Heart left ventricle (tissue), 16 donors: ENCODE measurements at regions of chr9 and their contacts with region 1.

Region 1: GRCh38 chr9:114653556-114654159 is 3.9 kb downstream of the TEX53 start:
- DNase-seq: peak in 4 of 5 donors; percentile 46 to 67 (median 58)
- ATAC-seq: peak; percentile 47 to 80 (median 76)
- H3K4me3 ChIP-seq: no peak overlapping the region
- H3K27ac ChIP-seq: no peak overlapping the region
- H3K4me1 ChIP-seq: peaks cover 0 to 7% (median 0%) of the 10 kb centered on the region in 12 donors
- H3K27me3 ChIP-seq: no peaks in the 10 kb centered on the region
- CTCF ChIP-seq: peak; percentile 73 to 89 (median 86)
- POLR2A ChIP-seq: no peak

Region 2: DNA sequence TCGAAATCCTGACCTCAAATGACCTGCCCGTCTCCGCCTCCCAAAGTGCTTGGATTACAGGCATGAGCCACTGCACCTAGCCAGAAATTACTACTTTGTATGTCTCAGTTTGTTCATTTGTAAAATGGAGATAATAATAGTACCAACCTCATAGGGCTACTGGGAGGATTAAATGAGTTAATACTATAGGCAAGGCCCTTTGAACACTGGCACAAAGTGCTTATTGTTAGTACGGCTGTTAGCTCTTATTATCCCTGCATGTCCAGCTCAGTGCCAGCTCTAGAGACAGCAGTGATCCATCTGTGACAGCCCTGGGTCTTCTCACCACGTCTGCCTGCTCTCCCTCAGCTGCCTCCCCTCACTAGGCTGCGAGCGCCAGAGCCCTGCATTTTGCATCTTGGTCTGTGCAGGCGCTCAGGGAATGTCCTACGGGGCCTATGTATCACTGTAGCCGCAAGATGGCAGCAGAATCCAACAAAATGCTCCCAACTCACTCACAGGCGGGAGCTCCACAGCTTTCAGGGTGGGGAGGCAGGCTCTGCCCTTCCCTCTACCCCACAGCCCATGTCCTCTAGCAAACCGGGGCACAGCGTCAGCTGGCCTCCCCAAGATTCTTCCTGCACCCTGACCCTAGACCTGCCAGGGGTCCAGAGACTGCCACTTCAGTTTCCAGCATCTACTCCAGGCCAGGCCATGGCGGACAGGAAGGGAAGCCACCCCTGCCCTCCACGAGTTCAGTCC is 248.2 kb before region 1 on chr9:
- intact Hi-C with region 1: loop called (anchors 1 to 5 kb)
- DNase-seq: peak; percentile 73 to 81 (median 79)
- ATAC-seq: peak; percentile 76 to 95 (median 92)
- H3K4me3 ChIP-seq: no peak overlapping the region
- H3K27ac ChIP-seq: no peak overlapping the region
- H3K4me1 ChIP-seq: peaks cover 0 to 7% (median 0%) of the 10 kb centered on the region in 12 donors
- H3K27me3 ChIP-seq: no peaks in the 10 kb centered on the region
- CTCF ChIP-seq: peak; percentile 72 to 87 (median 82)
- POLR2A ChIP-seq: no peak

Region 3: DNA sequence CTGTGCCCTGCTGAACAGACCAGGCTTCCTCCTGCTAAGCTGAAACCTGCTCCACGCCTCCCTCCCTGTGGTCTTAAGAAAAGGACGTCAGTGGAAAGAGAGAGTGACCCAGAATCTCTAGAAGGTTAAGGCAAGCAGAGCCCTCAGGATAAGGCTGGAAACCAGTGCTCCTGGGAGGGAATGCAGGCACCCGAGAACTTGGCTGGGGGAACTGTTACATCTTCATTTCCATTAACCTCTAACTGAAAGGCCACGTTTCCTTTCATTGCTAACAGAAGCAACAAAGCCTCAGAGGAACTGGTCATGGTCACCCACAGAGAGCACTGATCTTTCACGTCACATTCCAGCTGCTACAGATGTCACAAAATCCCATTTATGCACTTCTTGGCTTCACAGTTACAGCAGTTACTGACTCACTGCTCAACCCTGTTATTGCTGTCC is 239.8 kb before region 1 on chr9:
- intact Hi-C with region 1: loop called in 5 of 10 experiments (anchors 2 to 5 kb)
- DNase-seq: no peak
- ATAC-seq: peak in 1 of 4 donors; percentile 43
- H3K4me3 ChIP-seq: no peak overlapping the region
- H3K27ac ChIP-seq: peak overlapping the region in 2 of 12 donors; percentile 33 to 51
- H3K4me1 ChIP-seq: peaks cover 0 to 12% (median 0%) of the 10 kb centered on the region in 12 donors
- H3K27me3 ChIP-seq: no peaks in the 10 kb centered on the region
- CTCF ChIP-seq: no peak
- POLR2A ChIP-seq: no peak

Region 4: GRCh38 chr9:114434878-114435311 is 218.8 kb before region 1 on chr9:
- intact Hi-C with region 1: loop called in 6 of 10 experiments (anchors 5 to 10 kb)
- DNase-seq: no peak
- ATAC-seq: peak in 2 of 4 donors; percentile 36 to 41
- H3K4me3 ChIP-seq: no peak overlapping the region
- H3K27ac ChIP-seq: no peak overlapping the region
- H3K4me1 ChIP-seq: no peaks in the 10 kb centered on the region
- H3K27me3 ChIP-seq: peaks cover 0 to 11% (median 3%) of the 10 kb centered on the region in 9 donors
- CTCF ChIP-seq: peak; percentile 11 to 58 (median 38)
- POLR2A ChIP-seq: no peak

Region 5: DNA sequence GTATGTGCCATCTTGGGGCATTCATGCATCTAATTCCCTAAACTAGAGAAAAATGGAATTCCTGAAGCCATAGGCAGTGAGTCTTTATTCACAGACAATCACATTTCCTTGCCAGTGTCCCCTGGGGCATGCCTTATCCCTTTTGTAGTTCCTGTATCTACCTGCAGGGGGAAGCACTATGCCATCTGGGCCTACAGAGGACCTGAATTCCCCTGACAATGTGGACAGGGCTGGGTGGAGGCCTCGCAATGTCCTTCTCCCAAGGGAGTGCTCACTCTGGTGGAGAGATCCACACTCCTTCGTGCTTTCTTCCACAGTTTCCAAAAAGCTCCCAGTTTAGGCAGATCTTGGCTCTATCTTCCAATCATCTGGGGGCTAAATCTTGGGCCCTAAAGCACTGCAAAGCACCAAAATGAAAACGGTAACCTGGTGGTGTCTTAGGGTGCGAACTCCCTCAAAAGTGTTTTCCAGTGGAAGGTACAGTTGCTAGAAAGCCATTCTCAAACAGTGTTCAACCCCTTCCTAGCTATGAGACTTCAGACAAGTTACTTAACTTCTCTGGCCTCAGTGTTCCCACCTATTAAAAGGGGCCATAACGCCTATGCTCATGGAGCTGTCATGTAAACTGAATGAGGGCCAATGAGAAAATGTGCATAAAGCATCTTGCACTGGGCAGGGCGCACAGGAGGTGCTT is 165.9 kb before region 1 on chr9:
- intact Hi-C with region 1: loop called in 7 of 10 experiments (anchors 2 to 5 kb)
- DNase-seq: peak in 2 of 5 donors; percentile 44 to 46
- ATAC-seq: peak; percentile 71 to 88 (median 78)
- H3K4me3 ChIP-seq: no peak overlapping the region
- H3K27ac ChIP-seq: no peak overlapping the region
- H3K4me1 ChIP-seq: peaks cover 0 to 7% (median 0%) of the 10 kb centered on the region in 12 donors
- H3K27me3 ChIP-seq: peaks cover 0 to under 1% (median 0%) of the 10 kb centered on the region in 9 donors
- CTCF ChIP-seq: peak; percentile 47 to 76 (median 64)
- POLR2A ChIP-seq: no peak

Region 6: DNA sequence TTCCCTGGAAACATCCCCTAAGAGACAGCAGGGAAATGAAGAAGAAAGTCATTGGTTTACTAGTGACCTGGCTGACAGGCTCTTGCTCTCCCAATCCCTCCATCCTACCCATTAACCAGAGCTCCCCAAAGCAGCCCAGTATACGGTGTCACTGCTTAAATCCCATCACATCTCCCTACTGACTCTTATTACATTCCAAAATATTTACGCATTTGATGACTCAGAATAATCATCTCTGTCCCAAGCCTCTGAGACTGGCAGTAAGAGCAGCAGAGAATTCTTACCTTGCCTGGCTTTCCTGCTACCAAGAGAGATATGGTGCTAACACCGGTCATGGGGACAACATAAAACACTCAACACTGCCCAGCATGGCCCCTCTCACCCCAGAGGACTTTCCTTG is 128.2 kb before region 1 on chr9:
- intact Hi-C with region 1: loop called in 1 of 10 experiments (anchors 10 kb)
- DNase-seq: no peak
- ATAC-seq: no peak
- H3K4me3 ChIP-seq: no peak overlapping the region
- H3K27ac ChIP-seq: no peak overlapping the region
- H3K4me1 ChIP-seq: no peaks in the 10 kb centered on the region
- H3K27me3 ChIP-seq: peaks cover 0 to 37% (median 12%) of the 10 kb centered on the region in 9 donors
- CTCF ChIP-seq: no peak
- POLR2A ChIP-seq: no peak